PC-9 (cell line): ENCODE measurements at regions of chr16 and their contacts with region 1.

Region 1: GRCh38 chr16:89217388-89218191 is at the start of gene ZNF778:
- DNase-seq: peak; percentile 75 to 77
- H3K4me3 ChIP-seq: peak within 1 kb of the TSS; percentile 84
- H3K27ac ChIP-seq: peak within 1 kb of the TSS; percentile 53
- H3K4me1 ChIP-seq: 0 out of 2 replicates have a peak, but pooled peaks cover 5% of the 10 kb centered on the region
- H3K27me3 ChIP-seq: no peaks in the 10 kb centered on the region
- CTCF ChIP-seq: no peak
- total RNA-seq, gene ZNF778: 9.5 and 15.7 TPM in 2 replicates

Region 2: GRCh38 chr16:88569985-88570690 is 647.5 kb before region 1 on chr16 and contains the start of gene ZC3H18:
- CTCF ChIA-PET with region 1: no interaction called
- POLR2A ChIA-PET with region 1: no interaction called
- intact Hi-C with region 1: loop called (anchors 2 kb)
- DNase-seq: peak; percentile 78 to 97
- H3K4me3 ChIP-seq: peak within 1 kb of the TSS; percentile 95
- H3K27ac ChIP-seq: no peak within 1 kb of the TSS
- H3K4me1 ChIP-seq: peaks cover 18% of the 10 kb centered on the region
- H3K27me3 ChIP-seq: no peaks in the 10 kb centered on the region
- CTCF ChIP-seq: no peak
- total RNA-seq, gene ZC3H18: 76.4 and 78.4 TPM in 2 replicates

Region 3: GRCh38 chr16:88811769-88812512 is 405.6 kb before region 1 on chr16 and contains the start of gene APRT:
- CTCF ChIA-PET with region 1: no interaction called
- POLR2A ChIA-PET with region 1: no interaction called
- intact Hi-C with region 1: loop called (anchors 1 kb)
- DNase-seq: peak; percentile 85 to 99
- H3K4me3 ChIP-seq: peak within 1 kb of the TSS; percentile 91
- H3K27ac ChIP-seq: peak within 1 kb of the TSS; percentile 78
- H3K4me1 ChIP-seq: peaks cover 16% of the 10 kb centered on the region; the same call in 1 of the 2 replicates
- H3K27me3 ChIP-seq: no peaks in the 10 kb centered on the region
- CTCF ChIP-seq: peak; percentile 45; the same call in 1 of the 2 replicates
- total RNA-seq, gene APRT: 213 and 226 TPM in 2 replicates

Region 4: DNA sequence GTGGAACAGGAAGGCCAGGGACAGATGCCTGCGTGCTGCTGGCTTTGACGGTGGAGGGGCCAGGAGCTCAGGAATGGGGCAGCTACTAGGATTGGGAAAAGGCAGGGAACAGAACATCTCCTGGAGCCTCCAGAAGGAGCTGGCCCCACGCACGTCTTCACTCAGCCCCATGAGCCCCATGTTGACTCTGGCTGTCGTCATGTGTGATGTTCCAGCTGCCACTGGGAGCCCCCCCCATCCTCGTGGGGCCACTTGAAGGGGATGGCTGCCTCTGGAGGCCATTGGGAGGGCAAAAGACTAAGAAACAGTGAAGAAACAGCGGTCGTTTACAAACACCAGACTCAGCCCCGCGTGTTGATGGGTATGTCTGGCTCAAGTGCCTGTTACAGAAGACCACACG is 387.3 kb before region 1 on chr16:
- CTCF ChIA-PET with region 1: interaction called, 14 read pairs
- POLR2A ChIA-PET with region 1: no interaction called
- intact Hi-C with region 1: no loop called
- DNase-seq: no peak
- H3K4me3 ChIP-seq: no peak overlapping the region
- H3K27ac ChIP-seq: no peak overlapping the region
- H3K4me1 ChIP-seq: no peaks in the 10 kb centered on the region
- H3K27me3 ChIP-seq: no peaks in the 10 kb centered on the region
- CTCF ChIP-seq: no peak

Region 5: GRCh38 chr16:88925101-88925887 is 292.3 kb before region 1 on chr16:
- CTCF ChIA-PET with region 1: no interaction called
- POLR2A ChIA-PET with region 1: no interaction called
- intact Hi-C with region 1: loop called (anchors 5 kb)
- DNase-seq: peak; percentile 80 to 91
- H3K4me3 ChIP-seq: peak overlapping the region; percentile 33; the same call in 1 of the 2 replicates
- H3K27ac ChIP-seq: no peak overlapping the region
- H3K4me1 ChIP-seq: peaks cover 38% of the 10 kb centered on the region
- H3K27me3 ChIP-seq: no peaks in the 10 kb centered on the region
- CTCF ChIP-seq: peak; percentile 60; the same call in 1 of the 2 replicates

Region 6: GRCh38 chr16:88941913-88942909 is 275.4 kb before region 1 on chr16:
- CTCF ChIA-PET with region 1: no interaction called
- POLR2A ChIA-PET with region 1: no interaction called
- intact Hi-C with region 1: loop called (anchors 1 kb)
- DNase-seq: peak in 1 of 2 experiments; percentile 49
- H3K4me3 ChIP-seq: no peak overlapping the region
- H3K27ac ChIP-seq: no peak overlapping the region
- H3K4me1 ChIP-seq: no peaks in the 10 kb centered on the region
- H3K27me3 ChIP-seq: peaks cover 36% of the 10 kb centered on the region
- CTCF ChIP-seq: peak; percentile 46; the same call in 1 of the 2 replicates

Region 7: DNA sequence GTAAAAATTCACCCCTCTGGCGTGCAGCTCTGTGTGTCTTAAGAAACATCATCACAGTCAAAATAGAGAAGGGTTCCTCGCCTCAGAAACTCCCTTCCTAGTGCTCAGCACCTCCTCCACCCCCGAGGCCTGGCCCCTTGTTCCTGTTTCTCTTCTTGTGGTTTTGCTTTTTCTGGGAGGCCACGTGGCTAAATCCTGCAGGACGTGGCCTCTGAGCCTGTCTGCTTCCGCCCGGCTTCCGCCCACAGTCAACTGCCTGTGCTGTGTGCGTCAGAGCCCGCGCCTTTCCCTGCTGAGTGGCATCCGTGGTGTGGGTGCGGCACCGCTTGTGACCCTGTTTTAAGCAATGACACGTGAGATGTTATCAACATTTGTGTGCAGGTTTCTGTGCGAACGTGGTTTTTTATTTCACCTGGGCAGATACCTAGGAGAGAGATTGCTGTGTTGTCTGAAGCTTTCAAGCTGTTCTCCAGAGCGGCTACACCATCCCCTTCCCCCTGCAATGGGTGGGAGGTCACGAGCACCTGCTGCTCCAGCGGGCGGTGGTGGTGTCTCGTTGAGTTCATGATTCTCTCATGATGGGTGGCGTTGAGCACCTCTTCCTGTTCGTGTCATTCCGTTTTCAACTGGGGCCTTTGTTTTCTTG is 102.3 kb before region 1 on chr16:
- CTCF ChIA-PET with region 1: no interaction called
- POLR2A ChIA-PET with region 1: no interaction called
- intact Hi-C with region 1: no loop called
- DNase-seq: peak in 1 of 2 experiments; percentile 33
- H3K4me3 ChIP-seq: no peak overlapping the region
- H3K27ac ChIP-seq: no peak overlapping the region
- H3K4me1 ChIP-seq: no peaks in the 10 kb centered on the region
- H3K27me3 ChIP-seq: no peaks in the 10 kb centered on the region
- CTCF ChIP-seq: no peak